Endothelial cell of umbilical vein (primary cell): ENCODE measurements at regions of chr13 and their contacts with region 1.

Region 1: GRCh38 chr13:25375727-25376358 is 4.1 kb downstream of the ATP8A2 start:
- DNase-seq: peak; percentile 51
- H3K4me3 ChIP-seq: no peak overlapping the region
- H3K27ac ChIP-seq: no peak overlapping the region
- H3K4me1 ChIP-seq: peaks cover 3% of the 10 kb centered on the region
- H3K27me3 ChIP-seq: peaks cover 36 to 50% of the 10 kb centered on the region in 2 experiments
- CTCF ChIP-seq: peak; percentile 58 to 62
- POLR2A ChIP-seq: no peak

Region 2: DNA sequence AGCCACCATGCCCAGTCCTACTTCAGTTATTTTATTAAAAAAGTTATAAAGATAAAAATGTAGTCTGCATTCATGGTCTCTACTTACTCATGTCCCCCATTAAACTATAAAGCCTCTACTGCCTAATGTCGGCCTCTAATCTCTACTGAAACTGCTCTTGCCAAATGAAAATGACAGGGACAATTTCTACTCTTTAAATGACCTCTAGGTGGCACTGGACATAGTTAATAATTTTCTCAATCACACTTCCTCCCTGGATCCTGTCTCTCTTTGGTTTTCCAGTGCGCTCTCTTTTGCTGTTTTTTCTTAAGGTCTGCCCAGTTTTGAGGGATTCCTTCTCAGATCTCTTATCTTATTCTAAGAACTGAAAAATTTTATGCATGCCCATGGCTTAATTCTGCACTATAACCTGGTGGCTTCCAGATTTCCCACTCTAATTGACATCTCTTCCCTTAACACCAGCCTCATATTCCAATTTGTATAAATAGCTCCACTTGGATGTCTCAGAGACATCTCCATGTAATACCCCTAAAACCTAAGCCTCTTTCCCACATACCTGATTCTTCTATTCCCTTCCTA is 142.8 kb before region 1 on chr13:
- CTCF ChIA-PET with region 1: interaction called, 59 read pairs
- POLR2A ChIA-PET with region 1: no interaction called
- dilution Hi-C with region 1: no loop called
- intact Hi-C with region 1: loop called (anchors 1 kb)
- DNase-seq: peak; percentile 39
- H3K4me3 ChIP-seq: no peak overlapping the region
- H3K27ac ChIP-seq: no peak overlapping the region
- H3K4me1 ChIP-seq: no peaks in the 10 kb centered on the region
- H3K27me3 ChIP-seq: peaks cover 0 to 2% of the 10 kb centered on the region in 2 experiments
- CTCF ChIP-seq: peak; percentile 32 to 43
- POLR2A ChIP-seq: no peak

Region 3: DNA sequence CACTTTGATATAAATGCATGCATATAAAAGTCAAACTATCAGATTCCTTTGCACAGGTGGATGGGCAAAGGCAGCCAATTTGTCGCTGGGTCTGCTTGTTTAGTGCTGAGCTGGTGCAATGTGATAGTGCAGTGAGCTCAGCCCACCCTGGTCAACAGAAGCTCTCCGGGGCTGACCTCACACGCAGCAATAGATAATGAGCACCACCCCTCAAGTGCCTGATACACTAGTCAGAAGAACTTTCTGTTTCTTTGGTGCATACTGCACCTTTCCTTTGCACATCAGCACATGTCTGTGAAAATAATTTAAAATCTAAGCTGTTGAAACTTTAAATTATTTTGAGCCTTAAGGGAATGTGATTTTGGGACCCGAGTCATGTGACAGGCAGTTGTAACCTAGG is 16.1 kb after region 1 on chr13:
- CTCF ChIA-PET with region 1: interaction called, 21 read pairs
- POLR2A ChIA-PET with region 1: no interaction called
- dilution Hi-C with region 1: no loop called
- intact Hi-C with region 1: no loop called
- DNase-seq: no peak
- H3K4me3 ChIP-seq: no peak overlapping the region
- H3K27ac ChIP-seq: no peak overlapping the region
- H3K4me1 ChIP-seq: no peaks in the 10 kb centered on the region
- H3K27me3 ChIP-seq: no peaks in the 10 kb centered on the region
- CTCF ChIP-seq: no peak
- POLR2A ChIP-seq: no peak